Activated CD8-positive, alpha-beta memory T cell treated with anti-CD3 and anti-CD28 coated beads, Interleukin-2, amount 10 ng/mL, durations not matched to agents 7 days and 5 days (primary cell): ENCODE measurements at regions of chr14 and their contacts with region 1.

Region 1: DNA sequence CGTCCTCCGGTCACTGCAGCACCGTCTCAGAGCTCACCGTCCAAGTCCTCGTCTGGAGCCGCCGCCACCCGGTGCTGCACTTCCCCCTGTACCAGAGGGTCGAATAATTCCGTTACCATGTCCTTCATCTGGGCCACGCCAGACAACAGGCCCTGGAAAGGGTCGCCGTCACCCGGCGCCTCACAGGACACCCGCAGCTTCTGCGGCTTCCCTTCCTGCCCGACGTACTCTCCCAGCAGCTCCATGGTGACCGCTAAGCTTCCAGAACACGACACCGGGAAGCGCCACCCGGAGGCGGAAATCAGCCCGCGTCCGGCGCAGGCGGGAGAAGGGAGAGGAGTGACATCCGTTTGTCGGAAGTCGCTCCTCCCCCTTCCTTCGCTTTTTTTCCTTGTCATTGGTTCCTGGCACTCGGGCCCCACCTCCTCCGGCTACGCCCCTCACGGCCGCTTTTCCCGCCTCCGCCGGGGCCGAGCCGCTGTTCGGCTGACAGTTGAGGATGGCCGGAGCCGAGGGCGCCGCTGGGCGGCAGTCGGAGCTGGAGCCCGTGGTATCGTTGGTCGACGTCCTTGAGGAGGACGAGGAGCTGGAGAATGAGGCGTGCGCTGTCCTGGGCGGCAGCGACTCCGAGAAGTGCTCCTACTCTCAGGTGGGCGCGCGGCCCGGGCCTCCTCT is at the starts of genes GON7 and UBR7:
- DNase-seq: peak; percentile 95
- ATAC-seq: peak; percentile 93
- H3K4me3 Mint-ChIP-seq: peak within 1 kb of the TSS; percentile 88
- H3K27ac Mint-ChIP-seq: peak within 1 kb of the TSS; percentile 94
- H3K4me1 Mint-ChIP-seq: peaks cover 47% of the 10 kb centered on the region
- H3K27me3 Mint-ChIP-seq: no peaks in the 10 kb centered on the region
- total RNA-seq, gene GON7: 17.3 to 20.1 TPM
- total RNA-seq, gene UBR7: 40.2 to 41.6 TPM

Region 2: DNA sequence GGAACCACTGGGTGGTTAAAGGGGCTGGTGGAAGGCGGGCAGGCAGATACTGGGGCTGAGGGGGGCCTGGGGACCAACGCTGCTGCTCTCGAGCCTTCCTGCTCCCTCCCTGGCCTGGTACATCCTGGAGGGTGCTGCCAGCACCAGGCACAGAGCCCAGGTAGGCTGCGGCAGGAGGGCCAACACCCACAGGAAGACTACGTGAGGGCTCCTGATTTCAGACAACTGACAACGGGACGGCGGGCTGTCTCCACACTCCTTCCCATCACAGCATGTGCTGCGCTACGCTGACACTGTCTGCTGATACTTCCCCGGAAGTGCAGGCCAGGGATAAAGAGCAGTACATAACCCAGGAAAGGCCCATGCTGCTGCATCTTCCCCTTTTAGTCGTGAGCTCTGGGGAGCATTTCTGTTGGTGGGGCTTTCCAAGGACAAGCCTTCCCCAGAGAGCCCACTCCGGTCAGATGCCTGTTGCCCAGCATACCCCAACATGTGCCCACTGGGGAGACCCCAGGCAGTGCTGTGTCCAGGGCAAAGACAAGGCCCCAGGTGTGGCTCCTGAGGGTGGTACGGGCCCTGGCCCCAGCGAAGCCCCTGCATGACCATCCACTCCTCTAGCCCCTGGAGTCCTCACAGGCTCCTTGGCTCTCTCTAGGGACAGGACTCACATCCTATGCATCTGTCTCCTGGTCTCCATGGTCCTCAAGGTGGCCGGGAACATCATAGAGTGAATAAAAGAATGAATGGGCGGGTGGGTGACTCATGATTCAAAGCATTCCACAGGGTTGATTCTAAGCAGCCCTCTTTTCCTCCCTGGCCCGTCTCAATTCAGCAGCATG is 246.0 kb before region 1 on chr14:
- CTCF ChIA-PET with region 1: no interaction called
- DNase-seq: no peak
- ATAC-seq: no peak
- H3K4me3 Mint-ChIP-seq: no peak overlapping the region
- H3K27ac Mint-ChIP-seq: no peak overlapping the region
- H3K4me1 Mint-ChIP-seq: no peaks in the 10 kb centered on the region
- H3K27me3 Mint-ChIP-seq: no peaks in the 10 kb centered on the region

Region 3: DNA sequence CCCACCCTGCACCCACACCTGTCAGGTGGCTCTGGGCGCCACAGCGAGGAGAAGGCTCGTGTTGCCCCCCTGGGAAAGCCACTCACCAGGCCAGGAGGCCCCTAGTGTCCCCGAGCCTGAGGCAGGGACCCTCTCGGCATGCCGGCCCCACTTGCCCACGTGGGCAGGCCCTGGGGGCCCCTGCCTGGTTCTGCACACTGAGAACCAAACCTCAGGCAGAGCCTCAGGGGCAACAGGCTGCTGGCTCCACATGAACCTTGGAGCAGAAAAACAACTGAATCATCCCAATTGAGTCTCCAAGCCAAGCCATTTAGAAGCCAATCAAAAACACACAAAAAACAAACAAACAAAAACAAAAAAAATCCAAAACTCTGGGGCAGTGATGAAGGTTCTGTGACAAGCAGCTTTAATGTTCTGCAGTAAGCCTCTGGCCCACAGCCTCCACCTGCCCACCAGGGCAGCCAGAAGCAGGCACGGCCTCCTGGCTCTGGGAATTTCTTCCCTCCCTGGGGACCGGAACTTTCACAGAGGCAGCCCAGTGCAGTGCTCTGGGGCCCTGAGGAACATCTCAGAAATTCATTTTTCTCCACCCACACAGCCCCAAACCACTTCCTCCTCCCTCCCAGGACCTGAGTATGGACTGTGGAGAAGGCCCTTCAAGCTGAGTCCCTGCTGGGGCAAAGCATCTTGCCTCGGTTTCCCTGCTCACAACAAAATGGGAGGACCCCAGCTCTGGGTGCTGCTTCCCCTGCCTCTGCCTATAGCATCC is 193.8 kb before region 1 on chr14:
- CTCF ChIA-PET with region 1: no interaction called
- DNase-seq: no peak
- ATAC-seq: peak; percentile 55
- H3K4me3 Mint-ChIP-seq: no peak overlapping the region
- H3K27ac Mint-ChIP-seq: peak overlapping the region; percentile 63
- H3K4me1 Mint-ChIP-seq: peaks cover 18% of the 10 kb centered on the region
- H3K27me3 Mint-ChIP-seq: no peaks in the 10 kb centered on the region

Region 4: GRCh38 chr14:93184388-93185353 is 22.3 kb before region 1 on chr14 and contains the starts of genes LYSET and MOAP1:
- CTCF ChIA-PET with region 1: interaction called, 26 read pairs
- DNase-seq: peak; percentile 95
- ATAC-seq: peak; percentile 90
- H3K4me3 Mint-ChIP-seq: peak within 1 kb of the TSS; percentile 90
- H3K27ac Mint-ChIP-seq: peak within 1 kb of the TSS; percentile 94
- H3K4me1 Mint-ChIP-seq: peaks cover 31% of the 10 kb centered on the region
- H3K27me3 Mint-ChIP-seq: no peaks in the 10 kb centered on the region
- total RNA-seq, gene LYSET: 6.3 to 9.7 TPM
- total RNA-seq, gene MOAP1: 18.2 to 19.5 TPM

Region 5: DNA sequence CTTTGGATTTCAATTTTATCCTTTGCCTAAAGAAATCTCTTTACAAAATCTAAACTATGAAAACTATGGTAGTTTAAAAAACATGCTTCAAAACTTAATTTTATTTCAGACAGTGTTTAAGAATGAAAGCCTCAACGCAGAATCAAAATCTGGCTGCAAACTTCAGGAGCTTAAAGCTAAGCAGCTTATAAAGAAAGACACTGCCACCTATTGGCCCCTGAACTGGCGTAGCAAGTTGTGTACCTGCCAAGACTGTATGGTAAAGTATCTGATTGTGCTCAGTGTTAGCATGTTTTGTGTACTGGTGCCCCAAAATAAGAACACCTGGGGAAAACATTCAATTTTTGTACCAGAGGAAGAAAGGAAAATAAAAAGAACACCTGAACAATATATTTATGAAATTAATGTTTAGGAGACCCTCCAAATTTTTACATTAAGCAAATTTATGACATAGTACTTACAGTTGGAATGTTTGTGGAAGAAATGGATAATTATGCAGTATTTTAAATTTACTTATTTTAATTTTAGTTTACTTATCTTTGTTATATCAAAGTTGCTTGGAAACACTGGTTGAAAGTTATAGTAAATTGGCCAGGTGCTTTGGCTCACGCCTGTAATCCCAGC is 12.3 kb after region 1 on chr14:
- CTCF ChIA-PET with region 1: interaction called, 19 read pairs
- DNase-seq: peak; percentile 67
- ATAC-seq: peak; percentile 91
- H3K4me3 Mint-ChIP-seq: no peak overlapping the region
- H3K27ac Mint-ChIP-seq: no peak overlapping the region
- H3K4me1 Mint-ChIP-seq: peaks cover 8% of the 10 kb centered on the region
- H3K27me3 Mint-ChIP-seq: no peaks in the 10 kb centered on the region